ENCODE measurements at regions of chr16 and their contacts with region 1.

Region 1: DNA sequence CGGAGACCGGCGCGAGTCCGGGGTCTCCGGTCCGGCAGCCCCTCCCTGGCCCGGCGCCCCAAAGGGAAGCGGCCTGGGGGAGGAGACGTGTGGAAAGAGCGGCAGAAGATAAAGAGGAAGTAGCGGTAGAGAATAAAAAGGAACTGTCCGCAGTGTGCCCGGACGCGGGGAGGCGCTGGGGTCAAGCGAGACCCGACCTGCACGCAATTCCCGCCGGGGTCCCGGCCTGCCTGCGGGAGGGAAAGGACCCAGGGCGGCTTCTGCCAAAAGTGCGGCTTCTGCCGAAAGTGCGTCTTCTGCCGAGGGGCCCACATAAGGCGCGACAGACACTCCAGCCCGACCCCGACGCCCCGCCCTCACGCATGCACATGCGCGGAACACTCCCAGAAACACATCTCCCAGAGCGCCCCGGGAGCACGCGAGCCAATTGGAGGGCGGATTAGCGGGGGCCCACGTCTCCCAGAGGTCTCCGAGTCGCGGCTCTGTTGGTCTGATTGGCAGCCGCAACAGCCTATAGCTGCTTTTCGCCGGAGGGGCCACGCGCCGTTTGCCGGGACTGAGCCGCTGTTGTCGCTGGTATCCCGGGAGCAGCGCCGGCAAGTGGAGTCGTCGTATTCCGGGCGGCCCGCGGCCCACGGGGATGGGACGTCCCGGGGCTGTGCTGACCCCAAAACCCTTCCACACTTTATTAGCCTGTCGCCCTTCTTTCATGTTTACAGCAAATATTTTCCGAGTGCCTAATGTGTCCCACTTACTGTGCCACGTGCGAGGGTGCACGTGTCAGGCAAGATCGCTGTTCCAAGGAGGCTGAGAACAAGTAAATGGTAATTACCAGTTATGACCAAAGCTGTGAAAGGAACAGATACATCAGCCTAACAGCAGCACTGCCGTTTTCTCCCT is 8.0 kb upstream of the MEFV start:
- DNase-seq: peak; percentile 95 to 99 (median 98)
- ATAC-seq: peak; percentile 84 to 86
- H3K4me3 Mint-ChIP-seq: peak overlapping the region; percentile 86 to 97 (median 92)
- H3K27ac Mint-ChIP-seq: peak overlapping the region; percentile 96 to 99 (median 98)
- H3K4me1 Mint-ChIP-seq: peaks cover 11 to 44% (median 33%) of the 10 kb centered on the region in 4 donors
- H3K27me3 Mint-ChIP-seq: no peaks in the 10 kb centered on the region

Region 2: GRCh38 chr16:3158471-3159314 is 105.7 kb before region 1 on chr16:
- POLR2A ChIA-PET with region 1: interaction called, 17 read pairs
- DNase-seq: peak; percentile 91 to 98 (median 94)
- ATAC-seq: peak; percentile 83 to 91
- H3K4me3 Mint-ChIP-seq: peak overlapping the region; percentile 86 to 98 (median 90)
- H3K27ac Mint-ChIP-seq: peak overlapping the region; percentile 86 to 100 (median 94)
- H3K4me1 Mint-ChIP-seq: peaks cover 17 to 32% (median 27%) of the 10 kb centered on the region in 4 donors
- H3K27me3 Mint-ChIP-seq: peaks cover 0 to 2% (median 0%) of the 10 kb centered on the region in 5 donors

Region 3: DNA sequence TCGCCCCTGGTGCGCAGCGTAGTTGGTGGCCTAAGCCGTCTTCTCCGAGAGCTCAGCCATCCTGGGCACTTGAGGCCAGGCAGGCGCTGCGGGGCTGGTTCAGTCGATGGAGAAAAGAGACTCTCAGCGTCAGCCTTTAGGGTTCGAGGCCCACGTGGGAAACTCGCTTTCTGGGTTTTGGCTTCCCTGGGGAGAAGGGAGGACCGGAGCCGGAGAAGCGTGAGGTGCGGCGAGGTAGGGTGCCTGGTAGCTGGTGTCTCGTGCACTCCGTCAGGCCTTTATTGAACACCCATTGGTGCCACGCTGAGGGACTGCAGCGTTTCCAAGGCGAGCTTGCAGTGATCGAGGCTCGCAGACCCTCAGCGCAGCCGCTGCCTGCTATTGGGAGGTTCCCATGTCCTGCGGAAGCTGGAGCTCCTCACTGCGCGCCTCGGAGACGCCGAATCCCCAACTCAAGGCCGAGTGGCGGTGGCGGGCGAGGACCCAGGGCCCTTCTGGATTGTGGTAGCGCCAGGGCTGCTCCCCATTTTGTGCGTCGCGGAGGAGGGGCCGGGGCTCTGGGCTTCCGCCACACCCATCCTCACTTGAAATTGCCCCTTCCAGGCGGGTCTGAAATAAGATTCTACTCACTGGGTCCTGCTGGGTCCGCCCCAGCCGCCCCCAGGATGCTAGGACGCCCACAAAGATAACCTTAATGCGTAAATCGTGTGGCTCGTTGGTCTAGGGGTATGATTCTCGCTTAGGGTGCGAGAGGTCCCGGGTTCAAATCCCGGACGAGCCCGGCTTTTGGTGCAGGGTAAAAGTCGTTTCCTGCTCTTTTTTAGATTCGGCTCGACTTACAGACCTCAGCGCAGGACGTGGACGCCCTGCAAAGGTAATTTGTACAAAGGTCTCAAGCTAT is 75.2 kb before region 1 on chr16:
- POLR2A ChIA-PET with region 1: interaction called, 19 read pairs
- DNase-seq: peak in 4 of 10 donors; percentile 27 to 43 (median 35)
- ATAC-seq: peak; percentile 41 to 46
- H3K4me3 Mint-ChIP-seq: peak overlapping the region; percentile 45 to 86 (median 76)
- H3K27ac Mint-ChIP-seq: peak overlapping the region; percentile 6 to 81 (median 46)
- H3K4me1 Mint-ChIP-seq: peaks cover 20 to 46% (median 36%) of the 10 kb centered on the region in 4 donors
- H3K27me3 Mint-ChIP-seq: peaks cover 31 to 81% (median 59%) of the 10 kb centered on the region in 5 donors

Region 4: GRCh38 chr16:3234543-3235541 is 29.5 kb before region 1 on chr16 and contains the start of gene ZNF200:
- POLR2A ChIA-PET with region 1: interaction called, 18 read pairs
- DNase-seq: peak; percentile 85 to 99 (median 92)
- ATAC-seq: peak; percentile 92 to 94
- H3K4me3 Mint-ChIP-seq: peak within 1 kb of the TSS; percentile 92 to 99 (median 95)
- H3K27ac Mint-ChIP-seq: peak within 1 kb of the TSS; percentile 90 to 99 (median 98)
- H3K4me1 Mint-ChIP-seq: peaks cover 18 to 39% (median 34%) of the 10 kb centered on the region in 4 donors
- H3K27me3 Mint-ChIP-seq: no peaks in the 10 kb centered on the region
- polyA plus RNA-seq, gene ZNF200: 6.8 to 14.3 (median 13.9) TPM

Region 5: GRCh38 chr16:3282730-3283524 is 18.5 kb after region 1 on chr16 and contains the start of gene ZNF263:
- POLR2A ChIA-PET with region 1: interaction called, 56 read pairs
- DNase-seq: peak; percentile 88 to 98 (median 92)
- ATAC-seq: peak; percentile 89 to 90
- H3K4me3 Mint-ChIP-seq: peak within 1 kb of the TSS; percentile 90 to 98 (median 96)
- H3K27ac Mint-ChIP-seq: peak within 1 kb of the TSS; percentile 94 to 99 (median 98)
- H3K4me1 Mint-ChIP-seq: peaks cover 15 to 47% (median 39%) of the 10 kb centered on the region in 4 donors
- H3K27me3 Mint-ChIP-seq: no peaks in the 10 kb centered on the region
- polyA plus RNA-seq, gene ZNF263: 33.9 to 62.2 (median 54.2) TPM

Region 6: GRCh38 chr16:3400779-3401688 is 136.6 kb after region 1 on chr16 and contains the starts of genes ZNF174 and ZSCAN32:
- POLR2A ChIA-PET with region 1: interaction called, 22 read pairs
- DNase-seq: peak; percentile 94 to 99 (median 98)
- ATAC-seq: peak; percentile 95 to 97
- H3K4me3 Mint-ChIP-seq: peak within 1 kb of the TSS; percentile 88 to 97 (median 95)
- H3K27ac Mint-ChIP-seq: peak within 1 kb of the TSS; percentile 85 to 96 (median 90)
- H3K4me1 Mint-ChIP-seq: peaks cover 29 to 70% (median 55%) of the 10 kb centered on the region in 4 donors
- H3K27me3 Mint-ChIP-seq: no peaks in the 10 kb centered on the region
- polyA plus RNA-seq, gene ZNF174: 12.3 to 18.8 (median 14.0) TPM
- polyA plus RNA-seq, gene ZSCAN32: 8.6 to 20.8 (median 19.0) TPM